Activated T-helper 2 cell treated with anti-CD3 and anti-CD28 coated beads, Interferon-gamma antibody, Interleukin-2, Interleukin-4, amounts not matched to agents 10 μg/mL and 5 μg/mL and 100 μg/mL, durations not matched to agents 14 hours and 24 hours and 36 hours (primary cell): ENCODE measurements at regions of chr6 and their contacts with region 1.

Region 1: DNA sequence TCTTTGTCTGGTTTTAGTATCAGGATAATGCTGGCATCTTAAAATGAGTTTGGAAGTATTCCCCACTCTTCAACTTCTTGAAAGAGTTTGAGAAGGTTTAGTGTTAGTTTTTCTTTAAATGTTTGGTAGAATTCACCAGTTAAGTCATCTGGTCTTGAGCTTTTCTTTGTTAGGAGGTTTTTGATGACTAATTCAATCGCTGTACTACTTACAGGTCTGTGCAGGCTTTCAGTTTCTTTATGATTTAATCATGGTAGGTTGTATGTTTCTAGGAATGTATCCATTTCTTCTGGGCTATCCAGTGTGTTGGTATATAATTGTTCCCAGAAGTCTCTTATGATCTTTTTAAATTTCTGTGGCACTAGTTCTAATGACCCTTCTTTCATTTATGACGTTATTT is 215.5 kb downstream of the LRFN2 start:
- DNase-seq: no peak
- H3K4me3 Mint-ChIP-seq: peak overlapping the region; percentile 60
- H3K27ac Mint-ChIP-seq: peak overlapping the region; percentile 83
- H3K4me1 Mint-ChIP-seq: peaks cover 39% of the 10 kb centered on the region
- H3K27me3 Mint-ChIP-seq: no peaks in the 10 kb centered on the region

Region 2: DNA sequence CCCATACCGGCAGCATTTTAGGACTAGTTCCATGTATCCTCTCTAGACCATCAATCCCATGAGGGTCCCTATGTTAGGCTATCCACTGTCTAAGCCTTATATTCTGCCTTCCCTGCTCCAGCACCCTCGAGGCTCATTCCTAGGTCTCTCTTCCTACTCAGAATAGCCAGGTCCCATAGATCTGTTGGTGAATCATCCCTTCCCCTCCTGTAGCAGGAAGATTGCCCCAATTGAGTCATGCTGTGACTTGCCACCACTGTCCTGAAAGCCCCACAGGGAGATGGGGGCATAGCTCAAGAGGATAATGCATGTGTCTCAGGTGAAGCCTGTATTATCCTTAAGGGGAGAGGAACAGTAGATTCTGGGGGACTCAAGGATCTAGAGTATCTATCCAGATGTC is 294.3 kb before region 1 on chr6:
- intact Hi-C with region 1: no loop called
- DNase-seq: no peak
- H3K4me3 Mint-ChIP-seq: no peak overlapping the region
- H3K27ac Mint-ChIP-seq: no peak overlapping the region
- H3K4me1 Mint-ChIP-seq: no peaks in the 10 kb centered on the region
- H3K27me3 Mint-ChIP-seq: no peaks in the 10 kb centered on the region

Region 3: DNA sequence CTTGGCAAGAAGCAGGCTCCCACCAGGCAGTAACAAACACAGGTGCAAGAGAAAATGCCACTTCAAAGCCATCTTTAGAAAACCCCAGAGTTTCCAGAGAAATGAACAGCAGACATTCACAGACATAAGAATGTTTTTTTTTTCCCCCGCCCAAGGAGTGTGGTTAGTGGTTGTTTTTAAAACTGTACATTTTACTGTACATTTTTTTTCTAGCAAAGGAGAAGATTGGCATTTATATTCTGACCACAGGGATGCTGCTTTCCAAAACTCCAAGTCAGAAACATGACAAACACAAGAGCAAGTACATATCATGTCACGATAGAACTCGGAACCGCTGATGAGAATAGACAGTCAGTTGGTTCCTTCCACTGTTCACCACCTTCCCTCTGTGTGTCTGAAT is 17.6 kb after region 1 on chr6:
- intact Hi-C with region 1: loop called (anchors 2 kb)
- DNase-seq: peak; percentile 15
- H3K4me3 Mint-ChIP-seq: peak overlapping the region; percentile 45
- H3K27ac Mint-ChIP-seq: peak overlapping the region; percentile 74
- H3K4me1 Mint-ChIP-seq: peaks cover 58% of the 10 kb centered on the region
- H3K27me3 Mint-ChIP-seq: no peaks in the 10 kb centered on the region

Region 4: GRCh38 chr6:40419372-40419771 is 47.8 kb after region 1 on chr6:
- intact Hi-C with region 1: no loop called
- DNase-seq: no peak
- H3K4me3 Mint-ChIP-seq: no peak overlapping the region
- H3K27ac Mint-ChIP-seq: no peak overlapping the region
- H3K4me1 Mint-ChIP-seq: no peaks in the 10 kb centered on the region
- H3K27me3 Mint-ChIP-seq: peaks cover 6% of the 10 kb centered on the region

Region 5: DNA sequence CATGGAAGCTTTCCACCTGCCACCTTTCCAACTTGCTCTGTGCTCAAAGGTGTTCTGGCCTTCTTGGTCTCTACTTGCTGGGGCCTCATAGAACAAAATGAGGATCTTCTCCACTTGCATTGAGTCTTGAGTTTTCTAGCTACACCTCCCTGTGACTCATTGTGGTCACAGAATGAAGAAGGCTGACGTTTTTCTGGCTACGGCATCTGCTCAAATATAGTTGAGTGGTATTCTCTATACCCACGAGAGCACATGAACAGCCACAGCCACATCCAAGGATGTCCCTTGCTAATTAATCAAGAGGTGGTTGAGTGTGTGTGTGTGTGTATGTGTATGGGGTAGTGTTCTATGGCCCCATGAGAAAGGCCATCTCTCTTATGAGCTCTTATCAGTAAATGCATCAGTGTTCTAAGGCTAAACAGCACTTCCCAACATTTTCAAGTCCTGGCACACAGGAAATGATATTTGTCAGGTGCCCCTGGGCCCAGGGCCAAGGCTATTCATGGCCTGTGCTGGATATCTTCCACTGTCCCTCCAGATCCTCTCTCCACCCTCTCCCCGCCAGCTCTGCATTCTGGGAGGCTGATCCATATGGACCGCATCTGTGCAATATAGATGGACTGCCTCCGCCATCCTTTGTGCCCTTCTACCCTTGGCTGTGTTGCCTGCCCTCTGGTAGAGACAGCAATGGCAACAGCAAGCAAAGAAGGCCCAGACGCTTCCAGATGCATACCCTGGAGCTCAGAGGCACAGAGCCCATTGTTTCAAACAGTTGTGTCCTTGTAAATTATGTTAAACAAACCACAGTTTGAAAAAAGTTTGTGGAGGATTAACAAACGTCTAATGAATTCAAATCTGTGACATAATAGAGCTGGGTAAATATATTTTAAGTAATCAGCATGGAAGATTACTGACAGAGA is 65.3 kb after region 1 on chr6:
- intact Hi-C with region 1: loop called (anchors 5 kb)
- DNase-seq: peak; percentile 20
- H3K4me3 Mint-ChIP-seq: no peak overlapping the region
- H3K27ac Mint-ChIP-seq: no peak overlapping the region
- H3K4me1 Mint-ChIP-seq: peaks cover 18% of the 10 kb centered on the region
- H3K27me3 Mint-ChIP-seq: no peaks in the 10 kb centered on the region